Psoas muscle (tissue), 8 donors: ENCODE measurements at regions of chr18 and their contacts with region 1.

Region 1: DNA sequence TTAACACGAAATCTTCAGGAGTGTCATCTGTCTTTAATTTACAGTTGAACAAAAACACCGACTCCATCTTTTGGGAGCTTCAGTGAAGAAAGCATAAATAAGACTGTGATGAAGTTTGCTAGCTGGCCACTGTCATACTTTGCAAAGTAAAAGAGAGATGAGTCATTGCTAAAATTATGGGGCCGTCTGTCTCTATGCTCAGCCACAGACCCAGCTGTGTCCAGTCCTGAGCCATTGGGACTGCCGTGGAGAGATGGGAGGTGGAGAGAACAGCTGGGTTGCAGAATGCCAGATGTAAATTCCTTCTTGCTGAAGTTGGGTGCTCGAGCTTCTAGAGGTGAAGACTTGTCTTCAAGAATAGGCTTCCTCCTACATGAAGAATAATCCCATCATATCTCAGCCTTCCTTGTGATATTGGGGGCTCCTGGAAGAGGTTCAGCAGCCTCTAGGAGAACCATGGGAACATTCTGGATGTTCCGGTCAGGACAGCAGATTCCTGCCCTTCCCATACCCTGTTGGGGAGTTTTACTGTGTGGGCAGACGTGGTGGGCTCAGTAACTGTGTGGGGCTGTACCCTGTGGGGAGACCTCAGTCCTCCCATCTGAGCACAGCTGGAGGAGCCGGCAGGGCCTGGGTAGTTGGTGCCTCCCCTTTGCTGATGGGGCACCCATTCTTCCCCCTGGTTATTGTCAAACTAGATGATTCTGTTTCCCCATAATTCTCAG is 71.1 kb downstream of the LDLRAD4 start:
- DNase-seq: peak in 1 of 2 donors; percentile 39
- ATAC-seq: peak; percentile 76 to 86 (median 82)
- H3K4me3 ChIP-seq: no peak overlapping the region
- H3K27ac ChIP-seq: no peak overlapping the region
- H3K4me1 ChIP-seq: peaks cover 13% of the 10 kb centered on the region
- H3K27me3 ChIP-seq: no peaks in the 10 kb centered on the region
- CTCF ChIP-seq: no peak

Region 2: GRCh38 chr18:13026583-13027270 is 262.9 kb before region 1 on chr18:
- intact Hi-C with region 1: no loop called
- DNase-seq: no peak
- ATAC-seq: no peak
- H3K4me3 ChIP-seq: no peak overlapping the region
- H3K27ac ChIP-seq: no peak overlapping the region
- H3K4me1 ChIP-seq: no peaks in the 10 kb centered on the region
- H3K27me3 ChIP-seq: no peaks in the 10 kb centered on the region
- CTCF ChIP-seq: no peak

Region 3: DNA sequence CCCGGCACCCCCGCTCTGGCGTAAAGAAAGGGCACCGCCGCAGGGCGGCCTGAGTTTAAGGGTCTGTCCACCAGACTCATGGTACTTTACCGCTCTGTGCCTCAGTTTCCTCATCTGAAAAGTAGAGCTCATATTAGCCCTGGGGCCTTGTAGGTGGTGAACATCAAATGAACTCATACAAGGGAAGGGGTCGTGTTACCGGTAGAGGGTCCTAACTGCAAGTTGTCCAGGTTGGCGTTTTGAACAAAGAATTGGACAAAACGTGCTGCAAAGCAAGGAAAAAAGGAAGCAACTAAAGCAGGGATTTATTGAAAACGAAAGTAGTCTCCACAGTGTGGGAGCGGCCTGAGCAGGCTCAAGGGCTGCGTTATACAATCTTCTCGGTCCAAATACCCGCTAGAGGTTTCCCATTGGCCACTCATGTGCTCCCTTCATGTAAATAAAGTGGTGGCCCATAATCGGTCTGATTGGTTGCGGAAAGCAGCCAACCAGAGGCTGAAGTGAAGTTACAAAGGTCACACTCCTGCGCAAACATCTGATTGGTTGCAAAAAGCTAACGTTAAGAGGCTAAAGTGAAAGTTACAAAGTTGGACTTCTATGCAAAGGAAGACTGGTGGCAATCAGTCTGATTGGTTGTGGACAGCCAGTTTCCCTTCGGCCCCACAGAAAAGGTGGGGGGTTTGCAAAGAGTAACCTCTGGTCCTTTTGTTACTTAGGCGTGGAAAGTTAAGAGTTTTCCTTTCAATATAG is 151.8 kb before region 1 on chr18:
- intact Hi-C with region 1: no loop called
- DNase-seq: peak in 1 of 2 donors; percentile 59
- ATAC-seq: peak; percentile 70 to 87 (median 78)
- H3K4me3 ChIP-seq: peak overlapping the region; percentile 78
- H3K27ac ChIP-seq: peak overlapping the region; percentile 67
- H3K4me1 ChIP-seq: no peaks in the 10 kb centered on the region
- H3K27me3 ChIP-seq: peaks cover 0 to 5% (median 0%) of the 10 kb centered on the region in 3 donors
- CTCF ChIP-seq: no peak

Region 4: GRCh38 chr18:13253762-13254688 is 35.6 kb before region 1 on chr18:
- intact Hi-C with region 1: loop called in 1 of 2 experiments (anchors 5 kb)
- DNase-seq: no peak
- ATAC-seq: no peak
- H3K4me3 ChIP-seq: no peak overlapping the region
- H3K27ac ChIP-seq: no peak overlapping the region
- H3K4me1 ChIP-seq: peaks cover 15% of the 10 kb centered on the region
- H3K27me3 ChIP-seq: no peaks in the 10 kb centered on the region
- CTCF ChIP-seq: no peak